Mammary epithelial cell (primary cell): ENCODE measurements at regions of chr9 and their contacts with region 1.

Region 1: DNA sequence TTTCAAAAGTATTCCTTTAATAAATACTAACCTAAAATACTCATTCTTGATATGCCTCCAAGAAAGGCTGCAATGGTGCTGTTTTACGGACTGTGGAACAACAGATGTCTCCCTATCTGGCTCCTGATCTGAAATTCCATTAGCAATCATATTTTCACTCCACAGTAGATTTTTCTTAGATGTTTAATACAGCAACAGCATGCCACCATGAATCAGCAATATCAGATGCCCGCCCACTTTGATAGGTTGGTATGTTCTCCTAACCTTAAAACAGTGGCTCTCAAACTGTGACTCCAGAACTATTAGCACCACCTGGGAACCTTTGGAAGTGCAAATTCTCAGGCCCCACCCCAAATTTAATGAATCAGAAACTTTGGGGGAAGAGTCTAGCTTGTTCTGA is 110.2 kb downstream of the MLLT3 start:
- DNase-seq: peak; percentile 67
- H3K4me3 ChIP-seq: no peak overlapping the region
- H3K27ac ChIP-seq: no peak overlapping the region
- H3K4me1 ChIP-seq: peaks cover 8% of the 10 kb centered on the region
- H3K27me3 ChIP-seq: no peaks in the 10 kb centered on the region
- CTCF ChIP-seq: no peak

Region 2: GRCh38 chr9:20419533-20419932 is 92.6 kb before region 1 on chr9:
- CTCF ChIA-PET with region 1: no interaction called
- dilution Hi-C with region 1: loop called (anchors 10 kb)
- in situ Hi-C with region 1: no loop called
- intact Hi-C with region 1: no loop called
- DNase-seq: no peak
- H3K4me3 ChIP-seq: no peak overlapping the region
- H3K27ac ChIP-seq: no peak overlapping the region
- H3K4me1 ChIP-seq: no peaks in the 10 kb centered on the region
- H3K27me3 ChIP-seq: peaks cover 2% of the 10 kb centered on the region
- CTCF ChIP-seq: no peak